CD8-positive, alpha-beta memory T cell (primary cell): ENCODE measurements at regions of chr14 and their contacts with region 1.

Region 1: GRCh38 chr14:94136575-94137331 is 7.3 kb upstream of the IFI27L2 start:
- DNase-seq: peak; percentile 69 to 87 (median 72)
- H3K4me3 ChIP-seq: no peak overlapping the region
- H3K4me3 Mint-ChIP-seq: no peak overlapping the region
- H3K27ac ChIP-seq: no peak overlapping the region
- H3K27ac Mint-ChIP-seq: peak overlapping the region in 1 of 8 donors; percentile 29
- H3K4me1 ChIP-seq: no peaks in the 10 kb centered on the region
- H3K4me1 Mint-ChIP-seq: peaks cover 0 to 5% (median 0%) of the 10 kb centered on the region in 3 donors
- H3K27me3 ChIP-seq: peaks cover 4% of the 10 kb centered on the region
- H3K27me3 Mint-ChIP-seq: peaks cover 5 to 9% of the 10 kb centered on the region in 2 donors

Region 2: GRCh38 chr14:94026173-94026888 is 110.4 kb before region 1 on chr14 and contains the start of gene OTUB2:
- CTCF ChIA-PET with region 1: interaction called, 17 read pairs
- POLR2A ChIA-PET with region 1: no interaction called
- DNase-seq: peak; percentile 90 to 96 (median 94)
- H3K4me3 ChIP-seq: peak within 1 kb of the TSS; percentile 57
- H3K4me3 Mint-ChIP-seq: peak within 1 kb of the TSS; percentile 71 to 94 (median 82)
- H3K27ac ChIP-seq: no peak within 1 kb of the TSS
- H3K27ac Mint-ChIP-seq: peak within 1 kb of the TSS in 4 of 8 donors; percentile 19 to 85 (median 82)
- H3K4me1 ChIP-seq: peaks cover 5% of the 10 kb centered on the region
- H3K4me1 Mint-ChIP-seq: peaks cover 21 to 36% (median 34%) of the 10 kb centered on the region in 3 donors
- H3K27me3 ChIP-seq: no peaks in the 10 kb centered on the region
- H3K27me3 Mint-ChIP-seq: peaks cover 0 to 3% of the 10 kb centered on the region in 2 donors
- total RNA-seq, gene OTUB2: 1.1 to 1.8 TPM

Region 3: DNA sequence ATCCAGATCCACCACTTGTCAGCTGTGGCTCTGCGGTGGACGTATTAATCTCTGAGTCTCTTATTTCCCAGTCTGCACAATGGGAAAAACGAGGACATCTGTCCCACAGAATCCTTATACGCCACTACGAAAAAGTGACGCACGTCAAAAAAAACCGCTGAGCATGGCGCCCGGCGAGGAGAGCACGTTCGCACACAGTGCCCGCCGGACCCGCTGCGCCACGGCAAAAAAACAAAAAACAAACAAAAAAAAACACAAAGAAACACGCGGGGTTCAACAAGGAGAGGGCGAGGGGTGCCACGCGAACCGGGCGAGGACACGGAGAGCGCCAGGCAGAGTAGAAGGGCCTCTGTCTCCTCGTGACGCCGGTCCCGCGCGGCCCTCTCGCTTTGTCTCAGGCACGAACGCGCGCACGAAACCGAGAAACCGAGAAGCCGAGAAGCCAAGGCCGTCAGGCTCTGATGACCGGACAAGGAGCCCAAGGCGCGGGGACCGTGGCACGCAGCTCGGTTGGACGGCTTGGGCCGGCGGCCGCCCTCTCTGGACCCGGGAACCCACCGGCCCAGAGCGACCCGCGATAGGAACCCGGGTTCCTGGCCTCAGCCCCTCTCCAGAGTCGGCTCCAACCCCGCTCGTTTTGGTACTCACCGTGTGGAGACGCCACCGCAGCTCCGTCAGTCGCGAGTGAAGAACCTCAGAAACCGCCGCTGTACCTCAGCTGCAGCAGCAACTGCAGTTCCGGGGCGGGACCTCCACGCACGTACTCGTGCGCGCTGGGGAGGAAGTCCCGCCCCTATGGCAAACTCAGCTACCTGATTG is 56.1 kb before region 1 on chr14 and contains the start of gene DDX24:
- CTCF ChIA-PET with region 1: interaction called, 14 read pairs
- POLR2A ChIA-PET with region 1: interaction called, 5 read pairs
- DNase-seq: peak; percentile 95 to 98 (median 96)
- H3K4me3 ChIP-seq: peak within 1 kb of the TSS; percentile 83
- H3K4me3 Mint-ChIP-seq: peak within 1 kb of the TSS; percentile 94 to 100 (median 99)
- H3K27ac ChIP-seq: peak within 1 kb of the TSS; percentile 96
- H3K27ac Mint-ChIP-seq: peak within 1 kb of the TSS; percentile 98 to 100 (median 99)
- H3K4me1 ChIP-seq: peaks cover 40% of the 10 kb centered on the region
- H3K4me1 Mint-ChIP-seq: peaks cover 50 to 62% (median 56%) of the 10 kb centered on the region in 3 donors
- H3K27me3 ChIP-seq: no peaks in the 10 kb centered on the region
- H3K27me3 Mint-ChIP-seq: peaks cover 0 to 3% of the 10 kb centered on the region in 2 donors
- total RNA-seq, gene DDX24: 274 to 283 TPM

Region 4: GRCh38 chr14:94173885-94174603 is 37.3 kb after region 1 on chr14 and contains the start of gene PPP4R4:
- CTCF ChIA-PET with region 1: interaction called, 22 read pairs
- POLR2A ChIA-PET with region 1: interaction called, 3 read pairs
- DNase-seq: peak; percentile 77 to 92 (median 84)
- H3K4me3 ChIP-seq: peak within 1 kb of the TSS; percentile 77
- H3K4me3 Mint-ChIP-seq: peak within 1 kb of the TSS; percentile 81 to 96 (median 85)
- H3K27ac ChIP-seq: no peak within 1 kb of the TSS
- H3K27ac Mint-ChIP-seq: peak within 1 kb of the TSS in 7 of 8 donors; percentile 13 to 90 (median 74)
- H3K4me1 ChIP-seq: peaks cover 10% of the 10 kb centered on the region
- H3K4me1 Mint-ChIP-seq: peaks cover 16 to 29% (median 24%) of the 10 kb centered on the region in 3 donors
- H3K27me3 ChIP-seq: no peaks in the 10 kb centered on the region
- H3K27me3 Mint-ChIP-seq: peaks cover 20 to 29% of the 10 kb centered on the region in 2 donors
- total RNA-seq, gene PPP4R4: 1.2 to 1.8 TPM